ENCODE measurements at regions of chr7 and their contacts with region 1.

Region 1: DNA sequence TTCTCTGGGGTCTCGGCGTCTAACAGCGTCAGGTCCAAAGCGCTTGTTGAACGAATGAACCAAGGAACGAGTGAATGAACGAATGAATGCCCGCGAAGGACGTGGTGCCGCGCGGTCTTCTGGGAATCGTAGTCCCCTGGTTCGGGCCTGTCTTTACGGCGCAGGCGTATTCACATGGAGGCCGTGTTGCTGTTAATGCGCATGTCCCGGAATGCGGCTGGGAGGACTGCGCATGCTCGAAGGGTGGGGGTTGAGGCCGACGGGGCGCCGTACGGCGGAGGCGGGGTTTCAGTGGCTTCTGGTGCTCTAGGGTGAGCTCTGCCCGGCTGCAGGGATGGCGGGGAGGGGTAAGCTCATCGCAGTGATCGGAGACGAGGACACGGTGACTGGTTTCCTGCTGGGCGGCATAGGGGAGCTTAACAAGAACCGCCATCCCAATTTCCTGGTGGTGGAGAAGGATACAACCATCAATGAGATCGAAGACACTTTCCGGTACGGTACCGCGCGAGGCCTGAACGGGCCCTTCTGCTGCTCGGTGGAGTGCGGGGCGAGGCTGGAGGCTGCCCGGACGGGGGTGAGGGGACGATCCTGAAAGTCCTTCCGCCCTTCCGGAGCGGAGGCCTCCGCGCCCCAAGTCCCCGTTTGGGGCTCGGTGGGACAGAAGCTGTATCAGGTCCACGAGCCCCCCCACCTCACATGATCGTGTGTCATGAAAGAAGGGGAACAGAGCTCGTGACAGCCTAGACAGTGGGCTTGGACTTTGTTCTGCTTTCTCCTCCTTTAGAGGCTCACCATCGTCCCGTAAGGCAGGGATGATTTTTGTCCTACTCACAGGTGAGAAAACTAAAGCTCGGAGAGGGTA is at the start of gene ATP6V1F:
- DNase-seq: peak; percentile 99
- CTCF ChIP-seq: no peak

Region 2: DNA sequence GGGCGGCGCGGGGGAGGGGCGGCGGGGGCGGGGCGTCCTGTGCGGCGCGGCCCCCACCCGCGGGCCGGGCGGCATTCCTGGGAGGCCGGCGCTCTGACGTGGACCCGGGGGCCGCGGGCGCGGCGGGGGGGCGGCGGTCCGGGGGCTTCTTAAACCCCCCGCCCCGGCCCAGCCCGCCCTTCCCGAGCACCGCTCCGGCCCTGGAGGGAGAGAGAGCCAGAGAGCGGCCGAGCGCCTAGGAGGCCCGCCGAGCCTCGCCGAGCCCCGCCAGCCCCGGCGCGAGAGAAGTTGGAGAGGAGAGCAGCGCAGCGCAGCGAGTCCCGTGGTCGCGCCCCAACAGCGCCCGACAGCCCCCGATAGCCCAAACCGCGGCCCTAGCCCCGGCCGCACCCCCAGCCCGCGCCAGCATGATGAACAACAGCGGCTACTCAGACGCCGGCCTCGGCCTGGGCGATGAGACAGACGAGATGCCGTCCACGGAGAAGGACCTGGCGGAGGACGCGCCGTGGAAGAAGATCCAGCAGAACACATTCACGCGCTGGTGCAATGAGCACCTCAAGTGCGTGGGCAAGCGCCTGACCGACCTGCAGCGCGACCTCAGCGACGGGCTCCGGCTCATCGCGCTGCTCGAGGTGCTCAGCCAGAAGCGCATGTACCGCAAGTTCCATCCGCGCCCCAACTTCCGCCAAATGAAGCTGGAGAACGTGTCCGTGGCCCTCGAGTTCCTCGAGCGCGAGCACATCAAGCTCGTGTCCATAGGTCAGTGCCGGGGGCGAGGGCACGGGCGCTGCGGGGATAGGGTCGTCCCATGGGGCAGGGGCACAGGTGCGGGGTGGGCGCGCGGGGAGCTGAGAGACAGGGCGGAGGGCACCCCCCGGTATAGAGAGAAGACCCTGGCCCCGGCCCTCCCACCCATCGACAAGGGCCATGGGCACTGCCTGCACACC is 32.3 kb before region 1 on chr7 and contains the start of gene FLNC:
- CTCF ChIA-PET with region 1: interaction called, 21 read pairs
- POLR2A ChIA-PET with region 1: no interaction called
- DNase-seq: no peak
- CTCF ChIP-seq: no peak

Region 3: DNA sequence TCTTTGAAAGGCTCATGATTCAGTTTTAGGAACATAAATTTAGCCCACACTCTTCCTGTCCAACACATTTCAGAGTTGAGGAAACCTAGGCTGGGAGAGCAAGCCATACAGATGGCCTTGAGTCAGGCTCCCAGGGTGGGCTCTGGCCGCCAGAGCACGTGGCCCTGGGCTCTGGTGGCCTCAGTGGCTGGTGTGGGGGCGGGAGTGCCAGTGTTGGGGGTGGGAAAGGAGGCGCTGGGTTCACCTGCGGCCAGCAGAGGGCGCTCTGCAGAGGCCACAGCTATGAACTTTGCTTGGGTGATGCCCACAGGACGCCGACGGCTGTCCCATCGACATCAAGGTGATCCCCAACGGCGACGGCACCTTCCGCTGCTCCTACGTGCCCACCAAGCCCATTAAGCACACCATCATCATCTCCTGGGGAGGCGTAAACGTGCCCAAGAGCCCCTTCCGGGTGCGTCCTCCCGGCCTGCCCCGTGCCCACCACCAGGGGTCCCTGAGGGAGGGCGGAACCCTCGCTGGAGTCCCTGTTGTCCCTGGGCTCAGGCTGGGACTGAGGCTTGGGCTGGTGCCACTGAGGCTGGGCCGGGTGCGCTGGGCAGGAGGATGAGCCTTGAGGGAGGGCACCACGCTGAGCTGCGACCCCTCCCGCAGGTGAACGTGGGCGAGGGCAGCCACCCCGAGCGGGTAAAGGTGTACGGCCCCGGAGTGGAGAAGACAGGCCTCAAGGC is 20.7 kb before region 1 on chr7:
- CTCF ChIA-PET with region 1: interaction called, 20 read pairs
- POLR2A ChIA-PET with region 1: no interaction called
- DNase-seq: peak; percentile 88
- CTCF ChIP-seq: peak; percentile 69